Heart left ventricle (tissue), 16 donors: ENCODE measurements at regions of chr2 and their contacts with region 1.

Region 1: DNA sequence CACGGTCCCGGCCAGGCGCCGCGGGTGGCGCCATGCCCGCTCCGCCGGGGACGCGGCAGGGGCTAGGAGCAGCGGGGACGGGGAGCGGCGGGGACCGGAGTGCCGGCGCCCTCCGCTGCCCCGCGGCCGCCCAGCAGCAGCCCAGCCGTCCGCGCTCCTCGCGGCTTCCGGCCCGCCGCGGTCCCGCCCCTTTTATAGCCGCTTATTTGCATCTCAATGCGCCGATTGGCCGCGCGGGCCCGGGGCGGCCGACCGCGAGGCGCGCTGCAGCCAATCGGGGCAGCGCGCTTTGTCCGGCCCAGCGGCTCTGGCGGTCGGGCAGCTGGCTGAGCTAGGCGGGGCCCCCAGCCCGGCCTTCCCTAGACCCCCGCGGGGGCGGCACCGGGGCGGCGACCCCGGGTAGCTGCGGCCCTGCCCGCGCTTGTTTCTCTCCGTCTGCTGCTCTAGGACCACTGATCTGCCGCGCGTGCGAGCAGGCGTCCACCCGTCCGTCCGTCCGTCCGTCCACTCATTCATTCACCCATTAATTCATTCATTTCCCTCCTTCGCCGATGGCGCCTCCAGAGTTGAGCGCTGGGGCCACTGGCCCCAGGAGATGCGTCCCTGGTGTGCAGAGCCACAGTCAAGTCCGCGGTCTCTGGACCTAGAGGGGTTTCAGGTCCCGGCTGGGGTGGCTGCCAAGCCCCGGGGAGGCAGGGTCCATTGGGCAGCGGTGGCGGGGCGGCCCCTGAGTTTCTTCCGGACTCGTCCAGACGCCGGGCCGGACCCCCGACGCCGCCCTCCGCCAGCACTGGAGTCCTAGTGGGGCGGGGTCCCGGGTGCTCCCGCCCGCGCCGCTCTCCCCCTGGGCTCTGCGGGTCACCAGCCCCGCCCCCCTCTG is at the start of gene HES6:
- DNase-seq: peak; percentile 90 to 94 (median 91)
- ATAC-seq: peak; percentile 59 to 93 (median 90)
- H3K4me3 ChIP-seq: peak within 1 kb of the TSS; percentile 34 to 84 (median 64)
- H3K27ac ChIP-seq: peak within 1 kb of the TSS in 3 of 12 donors; percentile 30 to 75 (median 44)
- H3K4me1 ChIP-seq: peaks cover 0 to 39% (median 19%) of the 10 kb centered on the region in 12 donors
- H3K27me3 ChIP-seq: peaks cover 0 to 34% (median 7%) of the 10 kb centered on the region in 9 donors
- CTCF ChIP-seq: peak in 1 of 12 donors; percentile 29
- POLR2A ChIP-seq: peak; percentile 84 to 95
- total RNA-seq, gene HES6: 0.45 to 5.9 (median 2.5) TPM

Region 2: GRCh38 chr2:238203094-238203972 is 36.8 kb before region 1 on chr2 and contains the start of gene ILKAP:
- intact Hi-C with region 1: loop called in 2 of 10 experiments (anchors 5 kb)
- DNase-seq: peak; percentile 92 to 95 (median 92)
- ATAC-seq: peak; percentile 95 to 99 (median 99)
- H3K4me3 ChIP-seq: peak within 1 kb of the TSS; percentile 64 to 94 (median 74)
- H3K27ac ChIP-seq: peak within 1 kb of the TSS; percentile 90 to 97 (median 92)
- H3K4me1 ChIP-seq: peaks cover 0 to 49% (median 30%) of the 10 kb centered on the region in 12 donors
- H3K27me3 ChIP-seq: no peaks in the 10 kb centered on the region
- CTCF ChIP-seq: peak in 1 of 12 donors; percentile 22
- POLR2A ChIP-seq: peak; percentile 56 to 74
- total RNA-seq, gene ILKAP: 12.4 to 27.7 (median 23.4) TPM